ENCODE measurements at regions of chr3 and their contacts with region 1.

Region 1: DNA sequence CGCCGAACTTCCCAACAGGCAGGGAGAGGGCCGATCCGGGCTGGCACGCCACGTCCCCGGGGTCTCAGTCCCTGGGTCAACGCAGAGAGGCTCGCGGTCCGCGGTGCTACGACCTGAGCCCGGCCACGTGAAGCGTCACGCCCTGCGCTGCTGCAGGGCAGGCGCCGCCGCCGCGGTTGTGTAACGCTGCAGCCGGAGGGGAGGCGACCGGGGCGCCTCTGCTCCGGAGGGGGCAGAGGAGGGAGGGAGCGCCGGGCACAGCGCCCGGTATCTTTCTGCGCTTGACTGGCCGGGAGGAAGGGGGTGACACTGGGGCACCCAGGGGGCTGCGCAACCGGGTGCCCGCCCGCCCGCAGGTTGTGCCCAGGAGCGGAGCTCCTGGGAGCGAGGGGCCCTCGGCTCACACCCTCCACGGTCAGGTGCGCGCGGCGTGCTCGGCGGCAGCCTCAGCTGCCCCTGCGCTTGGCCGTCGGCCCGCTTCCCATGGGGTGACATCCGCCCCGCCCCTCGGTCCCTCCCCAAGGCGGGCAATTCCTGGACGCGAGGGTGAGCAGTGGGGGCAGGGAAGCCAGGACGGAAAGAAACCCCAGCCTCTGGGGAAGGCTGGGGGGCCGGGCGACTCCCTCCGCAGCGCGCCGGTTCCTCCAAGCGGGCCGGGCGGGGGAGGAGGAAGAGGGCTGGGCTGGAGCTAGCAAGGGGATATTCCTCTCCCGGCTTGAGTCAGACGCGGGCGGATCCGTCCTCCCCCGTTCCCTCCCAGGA is 852 bp upstream of the BHLHE40 start:
- DNase-seq: peak; percentile 99
- ATAC-seq: peak; percentile 69 to 80

Region 2: DNA sequence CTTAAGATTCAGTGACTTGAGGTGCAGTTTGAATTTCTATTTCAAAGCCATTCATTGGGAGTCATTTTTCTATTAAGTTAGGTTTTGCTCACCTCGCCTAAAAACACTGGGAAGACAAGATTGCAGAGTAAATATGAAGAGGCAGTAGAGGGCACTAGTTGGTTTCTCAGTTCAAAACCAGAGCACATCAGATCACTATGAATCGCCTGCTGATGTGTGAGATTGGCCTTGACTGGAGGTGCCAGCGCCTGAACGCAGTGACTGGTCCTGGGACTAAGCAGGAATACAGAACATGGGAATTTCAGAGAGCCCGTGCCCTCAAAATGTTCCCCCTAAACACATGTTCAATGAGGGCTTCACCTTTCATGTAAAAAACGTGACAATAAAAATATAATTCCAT is 256.3 kb before region 1 on chr3:
- intact Hi-C with region 1: loop called (anchors 1 to 10 kb)
- DNase-seq: peak; percentile 62
- ATAC-seq: peak; percentile 70 to 78

Region 3: GRCh38 chr3:4741404-4742307 is 236.7 kb before region 1 on chr3:
- intact Hi-C with region 1: loop called in 1 of 2 experiments (anchors 5 kb)
- DNase-seq: peak; percentile 74
- ATAC-seq: peak; percentile 85 to 88

Region 4: GRCh38 chr3:4826237-4827100 is 151.9 kb before region 1 on chr3:
- intact Hi-C with region 1: loop called in 1 of 2 experiments (anchors 2 kb)
- DNase-seq: peak; percentile 92
- ATAC-seq: peak; percentile 82 to 85

Region 5: GRCh38 chr3:4877173-4877787 is 101.1 kb before region 1 on chr3:
- intact Hi-C with region 1: loop called in 1 of 2 experiments (anchors 10 kb)
- DNase-seq: no peak
- ATAC-seq: no peak

Region 6: DNA sequence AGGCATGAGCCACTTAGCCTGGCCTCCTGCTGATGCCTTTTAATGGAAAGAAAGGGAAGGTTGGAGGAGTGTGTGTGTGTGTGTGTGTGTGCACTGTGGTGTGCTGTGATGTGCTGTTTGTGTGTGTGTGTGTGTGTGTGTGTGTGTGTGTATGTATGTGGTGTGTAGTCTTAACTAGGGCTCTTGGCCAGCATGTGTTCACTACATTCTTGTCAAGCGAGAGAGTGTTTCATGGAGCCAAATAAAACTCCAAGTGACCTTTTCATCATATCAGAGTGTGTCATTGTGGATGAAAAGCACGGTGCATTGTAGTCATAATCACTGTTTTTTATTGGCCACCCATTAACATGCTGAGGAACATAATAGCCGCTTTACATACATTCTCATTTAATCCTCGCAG is 30.0 kb before region 1 on chr3:
- intact Hi-C with region 1: no loop called
- DNase-seq: no peak
- ATAC-seq: peak; percentile 33 to 47

Region 7: DNA sequence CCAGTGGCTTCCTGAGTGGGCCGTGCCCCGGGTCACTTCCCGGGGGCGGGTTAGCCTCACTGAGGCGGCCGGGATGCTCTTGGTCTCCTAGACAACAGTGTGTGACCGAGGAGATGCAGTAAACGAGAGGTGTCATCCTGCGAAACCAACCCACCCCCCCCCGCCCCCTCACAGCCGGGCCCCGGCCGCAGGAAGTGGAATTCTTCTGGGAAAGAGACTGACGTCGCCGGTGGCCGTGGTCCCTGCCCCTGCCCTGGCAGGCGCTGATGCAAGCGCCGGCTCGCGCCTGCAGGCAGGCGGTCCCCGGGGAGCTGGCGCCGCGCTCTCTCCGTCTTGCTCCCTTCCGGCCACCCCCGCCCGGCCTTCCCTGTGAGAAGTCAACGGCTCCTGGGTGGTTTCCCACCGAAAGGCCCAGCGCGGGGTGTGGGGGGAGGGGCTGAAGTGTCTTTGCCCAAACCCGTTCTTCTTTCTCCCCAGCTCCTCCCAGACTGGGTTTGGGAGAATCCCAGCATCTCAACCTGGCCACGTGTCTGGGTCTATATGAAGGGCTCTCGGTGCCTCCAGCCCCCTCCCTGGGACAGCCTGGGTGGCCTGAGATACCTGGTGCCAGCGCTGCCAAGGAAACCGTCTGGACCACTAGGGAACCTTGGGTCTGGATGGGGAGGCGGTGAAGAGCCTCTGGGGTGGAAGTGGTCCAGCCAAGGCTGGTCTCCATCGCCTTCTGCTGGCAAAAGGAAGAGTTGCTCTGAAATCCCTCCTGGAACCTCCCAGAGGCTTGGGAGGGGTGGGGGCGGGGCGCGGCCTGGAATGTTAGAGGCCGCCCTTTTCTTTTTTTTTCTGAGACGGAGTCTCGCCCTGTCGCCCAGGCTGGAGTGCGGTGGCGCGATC is 48.2 kb after region 1 on chr3:
- intact Hi-C with region 1: loop called in 1 of 2 experiments (anchors 5 kb)
- DNase-seq: peak; percentile 95
- ATAC-seq: peak; percentile 90 to 92